Calu3 (cell line): ENCODE measurements at regions of chr13 and their contacts with region 1.

Region 1: GRCh38 chr13:30132623-30133553 is 174.5 kb downstream of the KATNAL1 start:
- DNase-seq: peak; percentile 92
- H3K4me3 Mint-ChIP-seq: no peak overlapping the region
- H3K27ac Mint-ChIP-seq: no peak overlapping the region
- H3K4me1 Mint-ChIP-seq: peaks cover 8% of the 10 kb centered on the region
- H3K27me3 Mint-ChIP-seq: no peaks in the 10 kb centered on the region
- CTCF ChIP-seq: peak; percentile 85

Region 2: GRCh38 chr13:30158774-30159445 is 26.0 kb after region 1 on chr13:
- CTCF ChIA-PET with region 1: interaction called, 17 read pairs
- intact Hi-C with region 1: loop called (anchors 1 kb)
- DNase-seq: peak; percentile 9
- H3K4me3 Mint-ChIP-seq: no peak overlapping the region
- H3K27ac Mint-ChIP-seq: no peak overlapping the region
- H3K4me1 Mint-ChIP-seq: peaks cover 11% of the 10 kb centered on the region
- H3K27me3 Mint-ChIP-seq: peaks cover 22% of the 10 kb centered on the region
- CTCF ChIP-seq: no peak

Region 3: DNA sequence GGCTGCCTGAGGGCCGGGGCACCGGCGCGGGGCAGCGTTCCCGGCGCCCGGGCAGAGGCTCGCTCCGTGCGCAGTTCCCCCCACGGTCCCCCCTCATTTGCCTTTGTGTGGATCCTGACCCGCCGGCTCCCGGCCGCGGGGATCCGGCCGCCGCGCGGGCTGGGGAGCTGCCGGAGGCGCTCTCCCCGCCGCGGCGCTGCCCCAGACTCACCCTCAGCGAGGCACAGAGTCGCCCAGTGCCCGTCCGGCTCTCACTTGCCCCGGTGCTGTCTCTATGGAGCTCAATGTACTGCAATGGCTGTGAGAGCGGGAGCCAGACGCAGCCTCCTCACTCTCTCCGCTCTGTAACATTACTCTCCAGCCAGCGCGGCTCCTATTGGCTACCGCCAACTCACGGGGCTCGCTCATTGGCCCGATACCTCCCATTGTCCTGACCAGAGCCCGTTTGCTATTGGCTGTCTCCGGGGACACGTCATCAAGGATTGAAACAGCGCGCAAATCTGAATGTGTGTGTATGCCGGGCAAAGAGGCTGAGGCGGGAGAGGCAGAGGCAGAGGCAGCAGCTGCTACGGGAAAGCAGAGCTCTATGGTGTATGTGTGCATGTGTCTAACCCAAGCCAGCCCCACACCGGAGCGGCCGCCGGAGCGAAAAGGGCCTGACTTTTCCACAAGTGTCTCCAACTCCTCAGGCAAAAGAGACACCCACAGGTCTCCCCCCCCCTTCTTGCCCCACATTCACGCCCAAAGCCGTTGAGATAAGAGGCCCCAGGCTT is 332.9 kb after region 1 on chr13 and contains the start of gene HMGB1:
- CTCF ChIA-PET with region 1: no interaction called
- intact Hi-C with region 1: loop called (anchors 5 kb)
- DNase-seq: peak; percentile 91
- H3K4me3 Mint-ChIP-seq: peak within 1 kb of the TSS; percentile 83
- H3K27ac Mint-ChIP-seq: peak within 1 kb of the TSS; percentile 99
- H3K4me1 Mint-ChIP-seq: no peaks in the 10 kb centered on the region
- H3K27me3 Mint-ChIP-seq: no peaks in the 10 kb centered on the region
- CTCF ChIP-seq: no peak
- total RNA-seq, gene HMGB1: 344 and 410 TPM in 2 replicates

Region 4: GRCh38 chr13:30581582-30581981 is 448.7 kb after region 1 on chr13:
- CTCF ChIA-PET with region 1: interaction called, 3 read pairs
- intact Hi-C with region 1: loop called (anchors 2 kb)
- DNase-seq: peak; percentile 9
- H3K4me3 Mint-ChIP-seq: no peak overlapping the region
- H3K27ac Mint-ChIP-seq: no peak overlapping the region
- H3K4me1 Mint-ChIP-seq: peaks cover 9% of the 10 kb centered on the region
- H3K27me3 Mint-ChIP-seq: no peaks in the 10 kb centered on the region
- CTCF ChIP-seq: no peak